Left ventricle myocardium inferior (tissue), 1 donor: ENCODE measurements at regions of chr1 and their contacts with region 1.

Region 1: GRCh38 chr1:202009326-202010179 is 834 bp upstream of the ELF3 start:
- DNase-seq: peak; percentile 43
- H3K4me3 ChIP-seq: no peak overlapping the region
- H3K27ac ChIP-seq: no peak overlapping the region
- H3K4me1 ChIP-seq: peaks cover 23% of the 10 kb centered on the region
- H3K27me3 ChIP-seq: no peaks in the 10 kb centered on the region
- CTCF ChIP-seq: peak; percentile 92

Region 2: DNA sequence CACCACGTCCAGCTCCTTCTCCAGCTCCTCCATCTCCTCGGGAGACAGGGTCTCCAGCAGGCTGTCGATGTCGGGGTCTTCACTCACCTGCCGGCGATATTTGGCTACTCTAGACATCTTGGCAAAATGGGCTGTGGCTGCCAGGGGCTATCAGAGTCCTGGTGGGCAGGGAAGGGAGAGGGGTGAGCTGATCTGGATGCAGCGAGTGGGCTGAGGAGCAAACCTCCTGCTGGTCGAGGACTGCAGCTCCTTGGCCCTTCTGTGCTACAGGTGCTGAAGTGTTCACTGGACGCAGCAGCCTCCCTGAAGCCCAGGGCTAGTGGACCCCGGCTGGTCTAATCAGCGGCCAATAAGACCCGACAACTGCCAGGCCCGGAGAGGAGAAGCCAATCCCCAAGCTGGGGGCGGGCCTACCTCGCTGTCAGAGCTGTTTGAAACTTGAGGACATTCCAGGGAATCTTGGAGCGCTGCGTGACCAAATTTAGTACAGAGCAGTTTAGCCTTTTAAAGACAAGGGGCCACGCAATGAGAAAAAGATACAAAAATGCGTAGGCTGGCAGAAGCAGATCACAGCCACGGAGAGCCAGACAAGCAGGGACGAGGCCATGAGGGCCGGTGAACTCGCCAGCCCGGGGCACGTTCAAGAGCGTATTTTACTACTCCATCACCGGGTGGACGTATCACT is 63.2 kb before region 1 on chr1 and contains the start of gene LMOD1:
- intact Hi-C with region 1: no loop called
- DNase-seq: peak; percentile 80
- H3K4me3 ChIP-seq: peak within 1 kb of the TSS; percentile 69
- H3K27ac ChIP-seq: peak within 1 kb of the TSS; percentile 75
- H3K4me1 ChIP-seq: peaks cover 26% of the 10 kb centered on the region
- H3K27me3 ChIP-seq: peaks cover 16% of the 10 kb centered on the region
- CTCF ChIP-seq: no peak
- total RNA-seq, gene LMOD1: 9.2 TPM

Region 3: GRCh38 chr1:202056644-202057461 is 47.3 kb after region 1 on chr1:
- intact Hi-C with region 1: no loop called
- DNase-seq: peak; percentile 72
- H3K4me3 ChIP-seq: no peak overlapping the region
- H3K27ac ChIP-seq: peak overlapping the region; percentile 55
- H3K4me1 ChIP-seq: peaks cover 6% of the 10 kb centered on the region
- H3K27me3 ChIP-seq: no peaks in the 10 kb centered on the region
- CTCF ChIP-seq: no peak

Region 4: DNA sequence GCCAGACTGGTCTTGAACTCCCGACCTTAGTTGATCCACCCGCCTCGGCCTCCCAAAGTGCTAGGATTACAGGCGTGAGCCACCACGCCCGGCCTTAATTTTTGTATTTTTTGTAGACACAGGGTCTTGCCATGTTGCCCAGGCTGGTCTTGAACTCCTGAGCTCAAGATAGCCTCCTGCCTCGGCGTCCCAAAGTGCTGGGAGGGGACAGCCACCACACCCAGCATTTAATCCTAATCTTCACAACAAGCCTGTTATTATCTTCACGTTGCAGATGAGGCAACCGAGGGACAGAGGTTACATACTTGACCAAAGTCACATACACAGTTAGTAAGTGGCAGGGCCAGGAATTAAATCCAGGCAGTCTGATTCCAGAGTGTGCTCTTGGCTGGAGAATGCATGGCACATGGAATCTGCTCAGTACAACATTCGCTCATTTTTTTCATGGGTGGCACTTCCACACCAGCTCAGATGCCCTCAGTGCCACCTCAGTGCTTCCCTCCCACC is 108.4 kb after region 1 on chr1:
- intact Hi-C with region 1: loop called (anchors 5 kb)
- DNase-seq: no peak
- H3K4me3 ChIP-seq: no peak overlapping the region
- H3K27ac ChIP-seq: peak overlapping the region; percentile 50
- H3K4me1 ChIP-seq: peaks cover 20% of the 10 kb centered on the region
- H3K27me3 ChIP-seq: no peaks in the 10 kb centered on the region
- CTCF ChIP-seq: no peak